ENCODE measurements at regions of chr12 and their contacts with region 1.

Region 1: DNA sequence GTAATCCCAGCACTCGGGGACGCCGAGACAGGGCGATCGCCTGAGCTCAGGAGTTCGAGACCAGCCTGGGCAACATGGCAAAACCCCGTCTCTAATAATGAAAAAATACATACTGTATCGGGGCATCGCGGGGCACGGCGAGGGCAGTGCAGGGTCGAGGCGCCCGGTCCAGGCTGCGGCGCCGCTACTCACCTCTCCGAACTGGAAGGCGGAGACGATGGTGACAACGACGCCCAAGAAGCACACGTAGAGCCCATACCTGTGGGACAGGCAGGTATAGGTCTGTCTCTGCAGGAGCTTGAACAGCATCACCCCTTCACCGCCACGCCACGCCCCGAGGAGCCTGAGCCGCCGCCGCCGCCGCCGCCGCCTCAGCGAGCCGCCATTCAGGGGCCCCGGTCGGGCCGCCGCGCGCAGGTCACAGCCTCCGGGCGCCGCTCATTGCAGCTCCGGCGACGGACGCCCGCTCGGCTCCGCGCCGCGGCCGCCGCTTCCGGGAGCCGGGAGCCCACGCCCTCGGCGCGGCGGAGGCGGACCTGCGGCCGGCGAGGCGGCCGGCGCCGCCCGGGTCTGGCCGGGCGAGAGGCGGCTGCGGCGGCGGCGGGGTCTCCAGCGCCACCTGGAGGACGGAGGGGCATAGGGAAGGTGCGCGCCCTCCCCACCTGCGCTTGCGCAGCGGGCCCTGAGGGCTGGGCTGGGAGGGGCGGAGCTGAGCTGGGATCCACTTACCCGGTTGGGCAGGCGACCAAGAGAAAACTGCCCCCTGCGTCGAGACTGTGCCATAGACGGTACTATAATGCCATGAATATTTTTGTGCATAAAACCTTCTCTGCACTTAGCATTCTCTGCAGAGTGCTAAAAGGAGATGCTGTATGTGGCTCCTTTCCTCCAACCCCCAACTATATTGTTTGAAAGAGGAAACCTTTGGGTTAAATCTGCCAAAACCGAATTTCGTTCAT is at the start of gene GNPTAB:
- DNase-seq: peak; percentile 97
- ATAC-seq: peak; percentile 93
- H3K4me3 ChIP-seq: peak within 1 kb of the TSS; percentile 65 to 88 (median 82)
- H3K4me3 Mint-ChIP-seq: peak within 1 kb of the TSS; percentile 99
- H3K27ac ChIP-seq: peak within 1 kb of the TSS; percentile 67 to 75
- H3K27ac Mint-ChIP-seq: peak within 1 kb of the TSS; percentile 92
- H3K4me1 ChIP-seq: peaks cover 17 to 22% of the 10 kb centered on the region in 2 donors
- H3K4me1 Mint-ChIP-seq: peaks cover 33% of the 10 kb centered on the region
- H3K27me3 ChIP-seq: no peaks in the 10 kb centered on the region
- H3K27me3 Mint-ChIP-seq: no peaks in the 10 kb centered on the region
- CTCF ChIP-seq: peak; percentile 68
- total RNA-seq, gene GNPTAB: 78.8 and 79.4 TPM in 2 replicates

Region 2: GRCh38 chr12:101172316-101172715 is 658.3 kb before region 1 on chr12:
- CTCF ChIA-PET with region 1: no interaction called
- POLR2A ChIA-PET with region 1: no interaction called
- intact Hi-C with region 1: no loop called
- DNase-seq: no peak
- ATAC-seq: no peak
- H3K4me3 ChIP-seq: no peak overlapping the region
- H3K4me3 Mint-ChIP-seq: no peak overlapping the region
- H3K27ac ChIP-seq: no peak overlapping the region
- H3K27ac Mint-ChIP-seq: no peak overlapping the region
- H3K4me1 ChIP-seq: no peaks in the 10 kb centered on the region
- H3K4me1 Mint-ChIP-seq: no peaks in the 10 kb centered on the region
- H3K27me3 ChIP-seq: peaks cover 0 to 2% (median 0%) of the 10 kb centered on the region in 4 experiments
- H3K27me3 Mint-ChIP-seq: no peaks in the 10 kb centered on the region
- CTCF ChIP-seq: no peak

Region 3: DNA sequence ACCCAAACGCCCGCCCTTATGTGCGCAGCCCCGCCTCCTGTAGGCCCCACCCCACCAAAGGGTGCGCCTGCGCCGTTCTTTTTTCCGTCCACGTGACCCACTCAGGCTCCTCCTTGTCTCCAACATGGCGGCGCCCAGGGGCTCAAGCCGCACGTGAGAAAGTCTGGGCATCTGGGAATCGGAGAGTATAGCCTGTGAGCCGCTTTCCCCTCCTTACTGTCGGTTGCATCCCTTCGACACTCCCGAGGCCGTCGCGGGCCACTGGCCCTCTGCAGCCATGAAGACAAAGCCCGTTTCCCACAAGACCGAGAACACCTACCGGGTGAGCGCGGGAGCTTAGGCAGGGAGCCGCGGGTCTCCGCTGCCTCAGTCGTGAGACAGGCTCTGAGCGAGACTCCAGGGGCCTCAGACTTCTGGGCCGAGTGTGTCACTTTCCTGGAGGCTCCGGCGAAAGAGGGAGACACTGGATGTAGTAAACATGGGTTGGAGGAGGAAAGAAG is 550.6 kb before region 1 on chr12 and contains the start of gene UTP20:
- CTCF ChIA-PET with region 1: no interaction called
- POLR2A ChIA-PET with region 1: no interaction called
- intact Hi-C with region 1: loop called (anchors 10 kb)
- DNase-seq: peak; percentile 94
- ATAC-seq: peak; percentile 100
- H3K4me3 ChIP-seq: peak within 1 kb of the TSS; percentile 69 to 100 (median 100)
- H3K4me3 Mint-ChIP-seq: peak within 1 kb of the TSS; percentile 97
- H3K27ac ChIP-seq: peak within 1 kb of the TSS; percentile 48 to 60
- H3K27ac Mint-ChIP-seq: peak within 1 kb of the TSS; percentile 93
- H3K4me1 ChIP-seq: peaks cover 4 to 11% of the 10 kb centered on the region in 2 donors
- H3K4me1 Mint-ChIP-seq: peaks cover 13% of the 10 kb centered on the region
- H3K27me3 ChIP-seq: peaks cover 0 to 10% (median 1%) of the 10 kb centered on the region in 4 experiments
- H3K27me3 Mint-ChIP-seq: peaks cover 17% of the 10 kb centered on the region
- CTCF ChIP-seq: no peak
- total RNA-seq, gene UTP20: 19.7 and 22.7 TPM in 2 replicates

Region 4: GRCh38 chr12:101490286-101490920 is 340.2 kb before region 1 on chr12:
- CTCF ChIA-PET with region 1: interaction called, 5 read pairs
- POLR2A ChIA-PET with region 1: no interaction called
- intact Hi-C with region 1: loop called (anchors 2 kb)
- DNase-seq: peak; percentile 48
- ATAC-seq: peak; percentile 69
- H3K4me3 ChIP-seq: no peak overlapping the region
- H3K4me3 Mint-ChIP-seq: no peak overlapping the region
- H3K27ac ChIP-seq: no peak overlapping the region
- H3K27ac Mint-ChIP-seq: no peak overlapping the region
- H3K4me1 ChIP-seq: no peaks in the 10 kb centered on the region
- H3K4me1 Mint-ChIP-seq: no peaks in the 10 kb centered on the region
- H3K27me3 ChIP-seq: no peaks in the 10 kb centered on the region
- H3K27me3 Mint-ChIP-seq: no peaks in the 10 kb centered on the region
- CTCF ChIP-seq: peak; percentile 61

Region 5: DNA sequence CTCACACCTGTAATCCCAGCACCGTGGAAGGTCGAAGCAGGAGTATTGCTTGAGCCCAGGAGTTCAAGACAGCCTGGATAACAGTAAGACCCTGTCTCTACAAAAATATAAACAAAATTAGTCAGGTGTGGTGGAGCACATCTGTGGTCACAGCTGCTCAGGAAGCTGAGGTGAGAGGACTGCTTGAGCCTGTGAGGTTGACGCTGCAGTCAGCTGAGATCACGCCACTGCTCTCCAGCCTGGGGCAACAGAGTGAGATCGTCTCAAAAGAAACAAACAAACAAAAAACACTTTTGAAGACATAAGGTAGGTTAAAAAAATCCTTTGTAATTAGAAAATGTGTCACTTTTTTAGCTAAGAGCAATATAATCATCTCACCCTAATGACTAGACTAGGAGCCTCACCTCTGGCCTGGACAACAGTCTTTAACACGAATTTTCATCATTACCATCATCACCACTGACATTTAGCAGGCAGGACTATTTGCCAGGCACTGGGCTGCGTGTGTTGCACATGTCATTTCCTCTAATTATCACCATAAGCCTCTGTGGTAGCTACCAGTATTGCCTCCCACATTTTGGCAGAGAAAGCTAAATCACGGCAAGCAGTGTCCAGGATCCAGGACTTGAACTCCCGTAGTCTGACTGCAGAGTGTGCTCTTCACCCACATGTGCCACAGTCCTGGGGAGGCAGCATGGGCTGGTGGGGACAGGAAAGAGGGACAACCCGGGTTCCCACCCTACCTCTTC is 86.7 kb before region 1 on chr12:
- CTCF ChIA-PET with region 1: interaction called, 10 read pairs
- POLR2A ChIA-PET with region 1: no interaction called
- intact Hi-C with region 1: loop called (anchors 1 kb)
- DNase-seq: peak; percentile 95
- ATAC-seq: peak; percentile 86
- H3K4me3 ChIP-seq: peak overlapping the region in 1 of 5 experiments; percentile 42
- H3K4me3 Mint-ChIP-seq: peak overlapping the region; percentile 48
- H3K27ac ChIP-seq: peak overlapping the region; percentile 94 to 97
- H3K27ac Mint-ChIP-seq: peak overlapping the region; percentile 99
- H3K4me1 ChIP-seq: peaks cover 45 to 50% of the 10 kb centered on the region in 2 donors
- H3K4me1 Mint-ChIP-seq: peaks cover 70% of the 10 kb centered on the region
- H3K27me3 ChIP-seq: no peaks in the 10 kb centered on the region
- H3K27me3 Mint-ChIP-seq: no peaks in the 10 kb centered on the region
- CTCF ChIP-seq: peak; percentile 59

Region 6: GRCh38 chr12:101780599-101780998 is 50.0 kb before region 1 on chr12:
- CTCF ChIA-PET with region 1: interaction called, 16 read pairs
- POLR2A ChIA-PET with region 1: no interaction called
- intact Hi-C with region 1: no loop called
- DNase-seq: no peak
- ATAC-seq: no peak
- H3K4me3 ChIP-seq: no peak overlapping the region
- H3K4me3 Mint-ChIP-seq: no peak overlapping the region
- H3K27ac ChIP-seq: no peak overlapping the region
- H3K27ac Mint-ChIP-seq: peak overlapping the region; percentile 64
- H3K4me1 ChIP-seq: peaks cover 5 to 7% of the 10 kb centered on the region in 2 donors
- H3K4me1 Mint-ChIP-seq: peaks cover 18% of the 10 kb centered on the region
- H3K27me3 ChIP-seq: no peaks in the 10 kb centered on the region
- H3K27me3 Mint-ChIP-seq: no peaks in the 10 kb centered on the region
- CTCF ChIP-seq: no peak

Region 7: GRCh38 chr12:101806265-101806664 is 24.4 kb before region 1 on chr12:
- CTCF ChIA-PET with region 1: no interaction called
- POLR2A ChIA-PET with region 1: no interaction called
- intact Hi-C with region 1: no loop called
- DNase-seq: no peak
- ATAC-seq: no peak
- H3K4me3 ChIP-seq: no peak overlapping the region
- H3K4me3 Mint-ChIP-seq: no peak overlapping the region
- H3K27ac ChIP-seq: no peak overlapping the region
- H3K27ac Mint-ChIP-seq: no peak overlapping the region
- H3K4me1 ChIP-seq: no peaks in the 10 kb centered on the region
- H3K4me1 Mint-ChIP-seq: peaks cover 18% of the 10 kb centered on the region
- H3K27me3 ChIP-seq: no peaks in the 10 kb centered on the region
- H3K27me3 Mint-ChIP-seq: no peaks in the 10 kb centered on the region
- CTCF ChIP-seq: no peak

Region 8: DNA sequence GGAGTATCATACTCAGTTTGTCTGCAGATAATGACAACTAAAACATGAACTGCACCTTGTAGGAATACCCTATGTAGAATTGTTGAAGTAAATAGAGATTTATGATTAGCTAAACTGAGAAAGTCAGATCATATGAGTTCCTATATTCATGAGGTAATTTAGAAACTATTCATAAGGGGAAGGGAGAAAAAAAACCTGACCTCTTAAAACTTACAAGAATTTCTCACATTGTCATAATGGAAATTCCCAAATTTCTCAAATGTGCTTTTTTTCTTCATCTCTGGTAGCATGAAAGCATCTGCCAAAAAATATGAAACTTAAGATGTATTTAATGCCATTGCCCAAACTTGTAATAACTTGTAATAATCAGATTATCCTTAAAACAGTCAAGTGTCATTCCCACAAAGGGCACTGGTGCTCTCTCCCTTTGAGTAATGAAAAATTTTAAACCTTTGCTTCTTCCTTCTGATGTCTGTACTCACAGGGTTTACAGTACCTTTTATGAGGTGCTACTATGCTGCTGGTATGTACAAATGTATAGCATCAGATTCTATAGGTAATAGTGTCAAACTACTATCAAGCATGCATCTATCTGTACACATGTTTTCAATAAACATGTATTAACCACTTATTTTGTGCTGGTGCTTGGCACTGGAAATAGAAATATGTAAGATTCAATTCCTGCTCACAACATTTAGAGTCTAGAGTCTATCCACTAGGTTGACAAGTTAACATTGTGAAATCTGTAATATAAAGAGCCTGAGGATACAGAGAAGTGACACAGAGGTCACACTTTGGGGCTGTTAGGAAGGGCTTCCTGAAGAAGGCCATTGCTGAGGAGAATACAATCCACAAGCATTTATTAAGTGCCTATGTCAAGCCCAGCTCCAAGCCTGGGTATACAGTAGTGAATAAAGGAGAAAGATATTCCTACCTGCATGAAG is 29.3 kb after region 1 on chr12:
- CTCF ChIA-PET with region 1: no interaction called
- POLR2A ChIA-PET with region 1: no interaction called
- intact Hi-C with region 1: no loop called
- DNase-seq: no peak
- ATAC-seq: no peak
- H3K4me3 ChIP-seq: no peak overlapping the region
- H3K4me3 Mint-ChIP-seq: no peak overlapping the region
- H3K27ac ChIP-seq: no peak overlapping the region
- H3K27ac Mint-ChIP-seq: no peak overlapping the region
- H3K4me1 ChIP-seq: peaks cover 7% of the 10 kb centered on the region in 2 donors
- H3K4me1 Mint-ChIP-seq: peaks cover 19% of the 10 kb centered on the region
- H3K27me3 ChIP-seq: no peaks in the 10 kb centered on the region
- H3K27me3 Mint-ChIP-seq: peaks cover 1% of the 10 kb centered on the region
- CTCF ChIP-seq: no peak

Region 9: GRCh38 chr12:102061560-102062418 is 231.1 kb after region 1 on chr12 and contains the start of gene WASHC3:
- CTCF ChIA-PET with region 1: no interaction called
- POLR2A ChIA-PET with region 1: no interaction called
- intact Hi-C with region 1: loop called (anchors 2 kb)
- DNase-seq: peak; percentile 95
- ATAC-seq: peak; percentile 96
- H3K4me3 ChIP-seq: peak within 1 kb of the TSS; percentile 72 to 92 (median 89)
- H3K4me3 Mint-ChIP-seq: peak within 1 kb of the TSS; percentile 95
- H3K27ac ChIP-seq: peak within 1 kb of the TSS; percentile 93 to 96
- H3K27ac Mint-ChIP-seq: peak within 1 kb of the TSS; percentile 96
- H3K4me1 ChIP-seq: peaks cover 5 to 12% of the 10 kb centered on the region in 2 donors
- H3K4me1 Mint-ChIP-seq: peaks cover 27% of the 10 kb centered on the region
- H3K27me3 ChIP-seq: peaks cover 0 to 4% (median 0%) of the 10 kb centered on the region in 4 experiments
- H3K27me3 Mint-ChIP-seq: no peaks in the 10 kb centered on the region
- CTCF ChIP-seq: no peak
- total RNA-seq, gene WASHC3: 52.8 and 55.8 TPM in 2 replicates

Region 10: DNA sequence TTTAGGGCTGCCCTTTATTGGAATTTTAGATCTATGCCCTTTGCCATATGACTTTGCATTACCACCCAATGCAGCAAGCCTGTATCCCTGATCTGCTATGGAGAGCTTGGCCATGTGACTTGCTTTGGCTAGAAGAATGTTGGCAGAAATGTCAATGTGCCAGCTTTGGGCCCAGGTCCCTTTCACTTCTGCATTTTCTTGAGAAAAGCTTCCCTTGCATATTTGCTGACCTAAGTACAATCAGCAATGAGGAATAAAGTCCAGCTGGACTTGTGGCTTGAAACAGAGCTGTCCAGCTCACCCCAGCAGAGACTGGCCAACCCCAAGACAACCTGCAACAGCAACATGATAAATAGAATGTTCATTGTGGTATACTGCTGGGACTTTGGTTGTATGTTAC is 950.5 kb after region 1 on chr12:
- CTCF ChIA-PET with region 1: no interaction called
- POLR2A ChIA-PET with region 1: no interaction called
- intact Hi-C with region 1: no loop called
- DNase-seq: no peak
- ATAC-seq: no peak
- H3K4me3 ChIP-seq: no peak overlapping the region
- H3K4me3 Mint-ChIP-seq: no peak overlapping the region
- H3K27ac ChIP-seq: no peak overlapping the region
- H3K27ac Mint-ChIP-seq: no peak overlapping the region
- H3K4me1 ChIP-seq: peaks cover 0 to 4% of the 10 kb centered on the region in 2 donors
- H3K4me1 Mint-ChIP-seq: no peaks in the 10 kb centered on the region
- H3K27me3 ChIP-seq: peaks cover 0 to 10% (median 7%) of the 10 kb centered on the region in 4 experiments
- H3K27me3 Mint-ChIP-seq: peaks cover under 1% of the 10 kb centered on the region
- CTCF ChIP-seq: no peak

Measured in B cell (primary cell).